ENCODE measurements at regions of chr2 and their contacts with region 1.

Region 1: GRCh38 chr2:222424729-222425671 is 657 bp downstream of the SGPP2 start:
- DNase-seq: peak; percentile 72
- H3K4me3 Mint-ChIP-seq: peak overlapping the region; percentile 90
- H3K27ac Mint-ChIP-seq: peak overlapping the region; percentile 85
- H3K4me1 Mint-ChIP-seq: peaks cover 61% of the 10 kb centered on the region
- H3K27me3 Mint-ChIP-seq: peaks cover 7% of the 10 kb centered on the region

Region 2: GRCh38 chr2:222451224-222451674 is 26.2 kb after region 1 on chr2:
- CTCF ChIA-PET with region 1: interaction called, 5 read pairs
- POLR2A ChIA-PET with region 1: no interaction called
- intact Hi-C with region 1: loop called (anchors 1 kb)
- DNase-seq: peak; percentile 22
- H3K4me3 Mint-ChIP-seq: no peak overlapping the region
- H3K27ac Mint-ChIP-seq: no peak overlapping the region
- H3K4me1 Mint-ChIP-seq: peaks cover 20% of the 10 kb centered on the region
- H3K27me3 Mint-ChIP-seq: no peaks in the 10 kb centered on the region

Region 3: GRCh38 chr2:222561817-222562645 is 137.0 kb after region 1 on chr2:
- CTCF ChIA-PET with region 1: interaction called, 5 read pairs
- POLR2A ChIA-PET with region 1: no interaction called
- intact Hi-C with region 1: loop called (anchors 2 kb)
- DNase-seq: peak; percentile 49
- H3K4me3 Mint-ChIP-seq: no peak overlapping the region
- H3K27ac Mint-ChIP-seq: no peak overlapping the region
- H3K4me1 Mint-ChIP-seq: no peaks in the 10 kb centered on the region
- H3K27me3 Mint-ChIP-seq: no peaks in the 10 kb centered on the region